Ascending aorta (tissue), 2 donors: ENCODE measurements at regions of chr1 and their contacts with region 1.

Region 1: DNA sequence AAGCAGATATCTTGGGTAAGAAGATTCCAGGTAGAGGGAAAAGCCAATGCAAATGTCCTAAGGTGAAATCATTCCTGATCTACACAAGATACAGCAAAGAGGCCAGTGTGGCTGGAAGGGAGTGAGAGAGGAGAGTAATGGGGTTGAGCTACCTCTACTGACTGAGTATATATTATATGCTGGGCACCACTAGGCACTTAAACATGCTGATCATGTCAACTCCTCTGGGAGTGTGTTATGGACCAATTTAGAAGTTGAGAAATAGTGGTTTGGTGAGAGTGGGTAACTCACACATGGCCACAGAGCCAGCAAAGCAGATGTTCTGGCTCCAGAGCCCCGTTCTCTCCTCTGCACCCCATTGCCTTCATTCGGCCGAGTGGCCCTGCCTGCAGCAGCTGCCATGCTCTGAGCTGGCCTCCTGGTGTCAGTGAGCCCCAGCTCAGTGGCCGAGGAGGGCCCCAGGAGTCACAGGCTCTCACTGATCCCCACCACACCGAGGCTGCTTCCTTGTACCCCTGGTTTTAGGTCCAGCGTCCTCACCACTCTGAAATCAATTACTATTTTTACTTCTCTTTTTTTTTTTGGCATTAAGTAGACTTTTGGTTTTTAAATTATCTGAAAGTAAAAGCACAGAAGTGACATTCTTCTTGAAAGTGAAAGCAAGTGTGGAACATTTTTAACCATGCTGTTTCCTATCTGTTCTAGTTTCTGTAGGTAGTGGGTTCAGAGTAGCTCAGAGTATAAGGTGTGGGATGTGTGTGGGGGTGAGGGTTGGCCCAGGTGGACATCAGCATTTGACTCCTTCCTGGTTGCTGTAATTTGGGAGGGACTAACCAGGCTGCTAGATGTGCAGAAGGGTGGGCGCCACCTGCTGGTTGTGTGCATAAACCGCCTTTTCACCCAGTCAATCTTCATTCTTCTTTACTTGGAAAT is 45.8 kb upstream of the CRNN start:
- DNase-seq: peak in 1 of 2 donors; percentile 76
- H3K4me3 ChIP-seq: peak overlapping the region in 1 of 2 donors; percentile 16
- H3K27ac ChIP-seq: peak overlapping the region; percentile 4 to 6
- H3K4me1 ChIP-seq: no peaks in the 10 kb centered on the region
- H3K27me3 ChIP-seq: no peaks in the 10 kb centered on the region
- CTCF ChIP-seq: peak; percentile 30 to 78 (median 74)

Region 2: GRCh38 chr1:152141974-152142584 is 317.8 kb before region 1 on chr1:
- intact Hi-C with region 1: loop called (anchors 5 kb)
- DNase-seq: peak in 1 of 2 donors; percentile 74
- H3K4me3 ChIP-seq: no peak overlapping the region
- H3K27ac ChIP-seq: no peak overlapping the region
- H3K4me1 ChIP-seq: no peaks in the 10 kb centered on the region
- H3K27me3 ChIP-seq: no peaks in the 10 kb centered on the region
- CTCF ChIP-seq: peak; percentile 48 to 71 (median 57)

Region 3: GRCh38 chr1:152525080-152525641 is 65.3 kb after region 1 on chr1:
- intact Hi-C with region 1: no loop called
- DNase-seq: no peak
- H3K4me3 ChIP-seq: no peak overlapping the region
- H3K27ac ChIP-seq: no peak overlapping the region
- H3K4me1 ChIP-seq: no peaks in the 10 kb centered on the region
- H3K27me3 ChIP-seq: no peaks in the 10 kb centered on the region
- CTCF ChIP-seq: no peak